ENCODE measurements at regions of chr18 and their contacts with region 1.

Region 1: GRCh38 chr18:23207191-23207955 is 72.1 kb downstream of the CABLES1 start:
- DNase-seq: no peak
- ATAC-seq: no peak
- H3K4me3 ChIP-seq: no peak overlapping the region
- H3K27ac ChIP-seq: no peak overlapping the region
- H3K4me1 ChIP-seq: no peaks in the 10 kb centered on the region
- H3K27me3 ChIP-seq: no peaks in the 10 kb centered on the region
- CTCF ChIP-seq: peak in 4 of 9 donors; percentile 7 to 18 (median 16)

Region 2: GRCh38 chr18:23020555-23021294 is 186.6 kb before region 1 on chr18:
- intact Hi-C with region 1: no loop called
- DNase-seq: no peak
- ATAC-seq: no peak
- H3K4me3 ChIP-seq: no peak overlapping the region
- H3K27ac ChIP-seq: peak overlapping the region in 1 of 10 donors; percentile 33
- H3K4me1 ChIP-seq: peaks cover 0 to 8% (median 0%) of the 10 kb centered on the region in 9 donors
- H3K27me3 ChIP-seq: no peaks in the 10 kb centered on the region
- CTCF ChIP-seq: no peak

Region 3: DNA sequence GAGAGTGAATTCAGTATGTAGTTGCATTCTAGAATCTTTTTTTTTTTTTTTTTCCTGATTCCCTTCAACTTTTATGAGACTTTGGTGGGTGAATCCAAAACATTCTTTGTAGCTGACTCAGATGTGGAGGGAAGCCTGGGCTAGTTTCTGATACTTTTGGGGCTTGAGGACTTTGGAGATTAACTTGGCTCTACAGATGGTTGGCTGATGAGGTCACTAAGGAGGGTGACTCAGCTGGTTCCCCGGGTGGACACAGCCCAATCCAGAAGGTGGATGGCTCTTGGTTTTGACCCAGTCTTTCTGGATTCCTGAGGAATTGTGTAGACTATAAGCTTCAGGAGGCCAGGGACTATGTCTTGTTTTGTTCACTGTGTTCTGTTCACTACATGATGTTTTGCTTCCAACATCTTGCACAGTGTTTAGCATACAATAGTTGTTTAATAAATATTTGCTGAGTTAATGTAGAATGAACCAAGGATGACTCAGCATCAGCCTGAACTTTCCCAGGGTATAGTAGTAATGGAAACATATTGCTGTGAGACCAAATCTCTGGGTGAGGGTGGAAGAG is 512.3 kb after region 1 on chr18:
- intact Hi-C with region 1: loop called in 1 of 10 experiments (anchors 10 kb)
- DNase-seq: no peak
- ATAC-seq: peak in 6 of 8 donors; percentile 33 to 91 (median 55)
- H3K4me3 ChIP-seq: no peak overlapping the region
- H3K27ac ChIP-seq: peak overlapping the region in 1 of 10 donors; percentile 2
- H3K4me1 ChIP-seq: peaks cover 0 to 25% (median 10%) of the 10 kb centered on the region in 9 donors
- H3K27me3 ChIP-seq: peaks cover 0 to 6% (median 0%) of the 10 kb centered on the region in 7 donors
- CTCF ChIP-seq: no peak

Measured in heart right ventricle (tissue), 16 donors.